Esophagus muscularis mucosa (tissue), 4 donors: ENCODE measurements at regions of chr11 and their contacts with region 1.

Region 1: DNA sequence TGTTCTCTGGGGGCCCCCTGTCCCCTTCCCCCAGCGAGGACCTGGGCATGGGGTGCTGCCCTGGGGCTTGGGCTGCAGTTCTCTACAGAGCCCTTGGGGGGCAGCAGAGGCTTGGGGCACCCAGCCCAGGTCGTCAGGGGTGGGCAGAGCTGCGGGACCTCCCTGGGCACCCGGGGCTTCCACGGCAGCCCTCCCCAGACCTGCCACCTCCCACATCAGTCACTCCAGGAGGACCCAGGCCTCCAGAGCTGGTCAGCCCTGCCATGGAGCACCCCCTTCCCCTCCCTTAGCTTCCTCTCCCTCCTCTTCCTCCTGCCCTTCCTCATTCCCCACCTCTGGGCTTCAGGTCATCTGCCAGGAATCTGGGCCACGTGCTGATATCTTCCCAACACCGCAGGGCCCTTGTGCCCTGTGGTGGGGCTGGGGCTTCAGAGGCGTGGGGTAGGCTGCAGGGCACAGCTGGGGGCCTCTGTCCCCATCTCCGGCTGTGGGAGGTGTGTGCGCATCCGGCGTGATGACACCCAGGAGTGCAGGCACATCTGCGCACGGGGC is 5.8 kb downstream of the TSPAN4 start:
- DNase-seq: no peak
- H3K4me3 ChIP-seq: peak overlapping the region; percentile 9 to 56 (median 50)
- H3K27ac ChIP-seq: no peak overlapping the region
- H3K4me1 ChIP-seq: peaks cover 58 to 98% (median 90%) of the 10 kb centered on the region in 4 donors
- H3K27me3 ChIP-seq: peaks cover 0 to 17% (median 5%) of the 10 kb centered on the region in 4 donors
- CTCF ChIP-seq: peak in 2 of 3 experiments; percentile 78 to 85
- EP300 ChIP-seq: no peak
- POLR2A ChIP-seq: no peak

Region 2: GRCh38 chr11:925496-926321 is 77.3 kb after region 1 on chr11 and contains the start of gene AP2A2:
- intact Hi-C with region 1: loop called (anchors 2 kb)
- DNase-seq: no peak
- H3K4me3 ChIP-seq: peak within 1 kb of the TSS; percentile 71 to 98 (median 90)
- H3K27ac ChIP-seq: peak within 1 kb of the TSS; percentile 90 to 99 (median 97)
- H3K4me1 ChIP-seq: peaks cover 30 to 58% (median 56%) of the 10 kb centered on the region in 4 donors
- H3K27me3 ChIP-seq: no peaks in the 10 kb centered on the region
- CTCF ChIP-seq: peak; percentile 74 to 91 (median 83)
- EP300 ChIP-seq: no peak
- POLR2A ChIP-seq: peak; percentile 54
- total RNA-seq, gene AP2A2: 49.5 to 82.6 (median 72.2) TPM

Region 3: GRCh38 chr11:1050581-1051355 is 202.3 kb after region 1 on chr11:
- intact Hi-C with region 1: loop called (anchors 2 kb)
- DNase-seq: no peak
- H3K4me3 ChIP-seq: no peak overlapping the region
- H3K27ac ChIP-seq: no peak overlapping the region
- H3K4me1 ChIP-seq: peaks cover 0 to 10% (median 0%) of the 10 kb centered on the region in 4 donors
- H3K27me3 ChIP-seq: peaks cover 0 to 86% (median 16%) of the 10 kb centered on the region in 4 donors
- CTCF ChIP-seq: peak; percentile 67 to 84 (median 83)
- EP300 ChIP-seq: no peak
- POLR2A ChIP-seq: no peak